ENCODE measurements at regions of chr4 and their contacts with region 1.

Region 1: DNA sequence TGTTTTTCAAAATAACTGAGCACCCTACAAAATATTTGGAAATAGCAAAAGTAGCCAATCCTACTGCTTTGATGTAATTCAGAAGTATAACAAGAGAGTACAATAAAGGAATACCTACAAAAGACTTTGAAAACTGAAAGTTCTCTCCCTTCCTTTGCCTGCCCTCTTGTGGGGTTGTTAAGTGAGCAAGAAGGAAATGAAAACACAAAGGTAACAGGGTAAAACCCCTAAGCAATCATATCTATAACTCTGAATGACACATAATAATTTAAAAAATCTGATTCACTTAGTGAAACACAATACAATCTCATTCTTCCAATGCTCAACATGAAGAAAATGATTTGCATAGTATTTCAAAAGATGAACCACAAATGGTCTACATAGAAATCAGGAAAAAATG is 98.2 kb downstream of the FRYL start:
- DNase-seq: no peak
- ATAC-seq: peak; percentile 46

Region 2: GRCh38 chr4:48578132-48578968 is 103.5 kb before region 1 on chr4:
- intact Hi-C with region 1: loop called (anchors 5 kb)
- DNase-seq: no peak
- ATAC-seq: peak; percentile 91

Region 3: GRCh38 chr4:48779998-48780742 is 98.3 kb after region 1 on chr4 and contains the start of gene FRYL:
- intact Hi-C with region 1: loop called (anchors 10 kb)
- DNase-seq: peak; percentile 99
- ATAC-seq: peak; percentile 92
- total RNA-seq, gene FRYL: 27.9 TPM